ENCODE measurements at regions of chr5 and their contacts with region 1.

Region 1: GRCh38 chr5:112860929-112861637 is at the start of gene SRP19:
- DNase-seq: peak; percentile 90 to 92
- H3K4me3 ChIP-seq: peak within 1 kb of the TSS; percentile 90 to 96 (median 93)
- H3K27ac ChIP-seq: peak within 1 kb of the TSS; percentile 59; the same call in 1 of the 2 replicates
- H3K4me1 ChIP-seq: peaks cover 0 to 9% (median 5%) of the 10 kb centered on the region in 4 experiments; a peak in 5 of 7 replicates
- H3K27me3 ChIP-seq: no peaks in the 10 kb centered on the region; a peak in 2 of 7 replicates
- CTCF ChIP-seq: peak in 1 of 3 experiments; percentile 4; a peak in 1 of 4 replicates
- EP300 ChIP-seq: no peak
- POLR2A ChIP-seq: peak; percentile 63 to 83
- RAD21 ChIP-seq: no peak
- total RNA-seq, gene SRP19: 78.6 and 79.9 TPM in 2 replicates

Region 2: GRCh38 chr5:112811023-112811422 is 50.1 kb before region 1 on chr5:
- CTCF ChIA-PET with region 1: no interaction called
- POLR2A ChIA-PET with region 1: no interaction called
- DNase-seq: no peak
- H3K4me3 ChIP-seq: no peak overlapping the region
- H3K27ac ChIP-seq: no peak overlapping the region
- H3K4me1 ChIP-seq: no peaks in the 10 kb centered on the region
- H3K27me3 ChIP-seq: no peaks in the 10 kb centered on the region
- CTCF ChIP-seq: no peak
- EP300 ChIP-seq: no peak
- POLR2A ChIP-seq: no peak
- RAD21 ChIP-seq: no peak

Region 3: DNA sequence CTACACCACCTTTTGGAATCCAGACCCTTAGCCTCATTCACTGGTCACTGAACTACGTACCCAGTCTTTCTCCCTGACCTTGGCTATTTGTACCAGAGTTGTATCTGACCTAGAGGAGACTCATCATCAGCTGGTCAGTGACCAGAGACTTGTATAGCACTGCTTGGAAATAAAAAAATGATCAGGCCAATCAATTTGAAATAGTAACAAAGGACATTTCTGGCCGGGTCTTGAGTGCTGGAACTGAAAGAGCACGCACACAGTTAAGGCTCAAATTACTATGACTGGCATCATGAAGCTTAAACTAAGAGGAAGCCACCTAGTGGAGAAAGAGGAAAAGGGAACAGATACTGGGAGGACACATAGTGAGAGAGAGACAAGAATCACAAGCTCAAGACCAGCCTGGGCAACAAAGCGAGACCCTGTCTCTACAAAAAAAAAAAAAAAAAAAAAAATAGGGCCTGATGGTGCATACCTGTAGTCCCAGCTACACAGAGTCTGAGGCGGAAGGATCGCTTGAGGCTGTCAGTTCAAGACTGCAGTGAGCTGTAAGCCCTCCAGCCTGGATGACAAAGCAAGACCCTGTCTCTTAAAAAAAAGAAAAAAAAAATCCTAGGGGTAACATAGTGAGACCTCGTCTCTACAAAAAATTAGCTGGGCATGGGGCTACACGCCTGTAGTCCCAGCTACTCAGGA is 12.8 kb before region 1 on chr5:
- CTCF ChIA-PET with region 1: interaction called, 20 read pairs
- POLR2A ChIA-PET with region 1: interaction called, 3 read pairs
- DNase-seq: no peak
- H3K4me3 ChIP-seq: peak overlapping the region in 1 of 4 experiments; percentile 34; a peak in 1 of 8 replicates
- H3K27ac ChIP-seq: no peak overlapping the region
- H3K4me1 ChIP-seq: peaks cover 0 to 9% (median 0%) of the 10 kb centered on the region in 4 experiments; a peak in 2 of 7 replicates
- H3K27me3 ChIP-seq: no peaks in the 10 kb centered on the region; a peak in 1 of 7 replicates
- CTCF ChIP-seq: peak in 2 of 3 experiments; percentile 49 to 73; a peak in 3 of 4 replicates
- EP300 ChIP-seq: no peak
- POLR2A ChIP-seq: no peak
- RAD21 ChIP-seq: peak; percentile 47 to 53

Region 4: GRCh38 chr5:112876362-112876761 is 15.3 kb after region 1 on chr5:
- CTCF ChIA-PET with region 1: interaction called, 3 read pairs
- POLR2A ChIA-PET with region 1: interaction called, 12 read pairs
- DNase-seq: no peak
- H3K4me3 ChIP-seq: peak overlapping the region in 1 of 4 experiments; percentile 5; a peak in 2 of 8 replicates
- H3K27ac ChIP-seq: no peak overlapping the region
- H3K4me1 ChIP-seq: peaks cover 0 to 4% (median 0%) of the 10 kb centered on the region in 4 experiments; a peak in 1 of 7 replicates
- H3K27me3 ChIP-seq: peaks cover 0 to 1% (median 0%) of the 10 kb centered on the region in 4 experiments; a peak in 1 of 7 replicates
- CTCF ChIP-seq: no peak
- EP300 ChIP-seq: no peak
- POLR2A ChIP-seq: no peak
- RAD21 ChIP-seq: no peak

Region 5: DNA sequence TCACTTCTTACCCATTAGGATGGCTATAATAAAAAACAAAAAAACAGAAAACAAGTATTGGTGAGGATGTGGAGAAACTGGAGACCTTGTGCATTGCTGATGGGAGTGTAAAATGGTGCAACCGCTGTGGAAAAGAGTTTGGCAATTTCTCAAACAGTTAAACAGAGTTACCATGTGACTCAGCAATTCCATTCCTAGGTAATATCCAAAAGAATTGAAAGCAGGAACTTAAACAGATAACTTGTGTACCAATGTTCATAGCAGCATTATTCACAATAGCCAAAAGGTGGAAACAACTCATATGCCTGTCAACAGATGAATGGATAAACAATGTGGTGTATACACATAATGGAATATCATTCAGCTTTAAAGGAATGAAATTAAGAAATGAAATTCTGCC is 144.4 kb after region 1 on chr5:
- CTCF ChIA-PET with region 1: no interaction called
- POLR2A ChIA-PET with region 1: no interaction called
- DNase-seq: no peak
- H3K4me3 ChIP-seq: no peak overlapping the region
- H3K27ac ChIP-seq: no peak overlapping the region
- H3K4me1 ChIP-seq: no peaks in the 10 kb centered on the region
- H3K27me3 ChIP-seq: no peaks in the 10 kb centered on the region
- CTCF ChIP-seq: no peak
- EP300 ChIP-seq: no peak
- POLR2A ChIP-seq: no peak
- RAD21 ChIP-seq: no peak